GM12878 (cell line): ENCODE measurements at regions of chr5 and their contacts with region 1.

Region 1: GRCh38 chr5:163408311-163408923 is 29.0 kb upstream of the CCNG1 start:
- DNase-seq: peak; percentile 25
- ATAC-seq: peak; percentile 91
- H3K4me3 ChIP-seq: no peak overlapping the region
- H3K27ac ChIP-seq: no peak overlapping the region
- H3K4me1 ChIP-seq: peaks cover 5% of the 10 kb centered on the region
- H3K27me3 ChIP-seq: no peaks in the 10 kb centered on the region; a peak in 1 of 4 replicates
- CTCF ChIP-seq: peak; percentile 73 to 87 (median 85)
- EP300 ChIP-seq: no peak
- POLR2A ChIP-seq: no peak
- RAD21 ChIP-seq: peak; percentile 96

Region 2: DNA sequence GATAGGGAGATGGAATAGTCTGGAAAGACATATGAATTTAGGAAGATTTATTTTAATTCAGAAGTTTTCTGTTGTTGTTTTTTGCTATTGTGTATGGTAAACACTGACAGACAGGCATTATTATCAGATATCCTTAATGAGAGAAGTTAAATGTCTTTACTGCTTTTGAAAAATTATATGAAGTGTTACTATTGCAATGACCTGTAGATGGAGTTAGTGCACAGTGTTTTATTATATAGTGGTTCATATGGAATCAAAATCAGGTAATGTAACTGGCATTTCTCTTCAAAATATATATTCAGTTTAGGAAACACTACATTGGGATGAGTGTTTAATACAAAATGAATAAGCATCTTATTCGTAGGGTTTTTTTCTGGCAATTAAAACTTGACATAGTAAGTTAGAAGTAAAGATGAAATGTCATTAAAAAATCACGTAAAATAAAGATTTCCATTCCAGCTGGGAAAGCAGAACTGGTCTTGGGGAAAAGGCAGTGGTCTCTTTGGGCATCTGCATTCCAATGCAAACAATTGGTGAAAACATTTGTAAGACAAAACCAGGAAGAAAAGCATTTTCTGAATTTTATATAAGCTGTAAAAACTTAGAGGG is 1556.6 kb before region 1 on chr5:
- CTCF ChIA-PET with region 1: interaction called, 12 read pairs
- POLR2A ChIA-PET with region 1: no interaction called
- RAD21 ChIA-PET with region 1: interaction called, 4 read pairs
- SMC1A ChIA-PET with region 1: no interaction called
- in situ Hi-C with region 1: no loop called
- intact Hi-C with region 1: loop called (anchors 2 kb)
- DNase-seq: no peak
- ATAC-seq: peak; percentile 47; the same call in 2 of the 3 replicates
- H3K4me3 ChIP-seq: no peak overlapping the region
- H3K27ac ChIP-seq: no peak overlapping the region
- H3K4me1 ChIP-seq: no peaks in the 10 kb centered on the region
- H3K27me3 ChIP-seq: no peaks in the 10 kb centered on the region
- CTCF ChIP-seq: peak in 2 of 3 experiments; percentile 9 to 24; a peak in 2 of 6 replicates
- EP300 ChIP-seq: no peak
- POLR2A ChIP-seq: no peak
- RAD21 ChIP-seq: peak; percentile 22; the same call in 1 of the 2 replicates

Region 3: GRCh38 chr5:162209005-162209605 is 1199.3 kb before region 1 on chr5:
- CTCF ChIA-PET with region 1: interaction called, 22 read pairs
- POLR2A ChIA-PET with region 1: no interaction called
- RAD21 ChIA-PET with region 1: interaction called, 5 read pairs
- SMC1A ChIA-PET with region 1: interaction called, 8 read pairs
- in situ Hi-C with region 1: no loop called
- intact Hi-C with region 1: loop called (anchors 2 kb)
- DNase-seq: peak; percentile 24
- ATAC-seq: peak; percentile 100
- H3K4me3 ChIP-seq: no peak overlapping the region
- H3K27ac ChIP-seq: no peak overlapping the region
- H3K4me1 ChIP-seq: no peaks in the 10 kb centered on the region
- H3K27me3 ChIP-seq: no peaks in the 10 kb centered on the region
- CTCF ChIP-seq: peak; percentile 42 to 69 (median 58); a peak in 5 of 6 replicates
- EP300 ChIP-seq: no peak
- POLR2A ChIP-seq: no peak
- RAD21 ChIP-seq: peak; percentile 58

Region 4: GRCh38 chr5:163079618-163080017 is 328.8 kb before region 1 on chr5:
- CTCF ChIA-PET with region 1: interaction called, 4 read pairs
- POLR2A ChIA-PET with region 1: no interaction called
- RAD21 ChIA-PET with region 1: interaction called, 4 read pairs
- SMC1A ChIA-PET with region 1: no interaction called
- in situ Hi-C with region 1: no loop called
- intact Hi-C with region 1: loop called (anchors 5 kb)
- DNase-seq: no peak
- ATAC-seq: peak; percentile 87
- H3K4me3 ChIP-seq: no peak overlapping the region
- H3K27ac ChIP-seq: no peak overlapping the region
- H3K4me1 ChIP-seq: no peaks in the 10 kb centered on the region
- H3K27me3 ChIP-seq: no peaks in the 10 kb centered on the region
- CTCF ChIP-seq: peak; percentile 42 to 69 (median 55); a peak in 4 of 6 replicates
- EP300 ChIP-seq: no peak
- POLR2A ChIP-seq: no peak
- RAD21 ChIP-seq: peak; percentile 53

Region 5: DNA sequence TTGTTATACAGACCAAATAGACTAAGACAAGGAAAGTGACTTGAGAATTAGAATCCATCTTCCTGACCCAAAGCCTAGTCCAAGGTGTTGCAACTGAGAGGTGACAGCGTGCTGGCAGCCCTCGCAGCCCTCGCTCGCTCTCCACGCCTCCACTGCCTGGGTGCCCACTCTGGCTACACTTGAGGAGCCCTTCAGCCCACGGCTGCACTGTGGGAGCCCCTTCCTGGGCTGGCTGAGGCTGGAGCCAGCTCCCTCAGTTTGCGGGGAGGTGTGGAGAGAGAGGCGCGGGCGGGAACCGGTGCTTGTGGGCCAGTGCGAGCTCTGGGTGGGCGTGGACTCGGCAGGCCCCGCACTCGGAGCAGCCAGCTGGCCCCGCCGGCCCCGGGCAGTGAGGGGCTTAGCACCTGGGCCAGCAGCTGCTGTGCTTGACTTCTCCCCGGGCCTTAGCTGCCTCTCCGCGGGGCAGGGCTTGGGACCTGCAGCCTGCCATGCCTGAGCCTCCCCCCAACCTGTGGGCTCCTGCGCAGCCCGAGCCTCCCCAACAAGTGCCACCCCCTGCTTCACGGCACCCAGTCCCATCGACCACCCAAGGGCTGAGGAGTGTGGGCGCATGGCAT is 52.7 kb before region 1 on chr5:
- CTCF ChIA-PET with region 1: interaction called, 6 read pairs
- POLR2A ChIA-PET with region 1: no interaction called
- RAD21 ChIA-PET with region 1: interaction called, 5 read pairs
- SMC1A ChIA-PET with region 1: interaction called, 5 read pairs
- in situ Hi-C with region 1: no loop called
- intact Hi-C with region 1: loop called (anchors 2 kb)
- DNase-seq: no peak
- ATAC-seq: no peak
- H3K4me3 ChIP-seq: no peak overlapping the region
- H3K27ac ChIP-seq: no peak overlapping the region
- H3K4me1 ChIP-seq: peaks cover 10% of the 10 kb centered on the region
- H3K27me3 ChIP-seq: no peaks in the 10 kb centered on the region
- CTCF ChIP-seq: no peak
- EP300 ChIP-seq: no peak
- POLR2A ChIP-seq: no peak
- RAD21 ChIP-seq: no peak

Region 6: GRCh38 chr5:163459922-163460766 is 51.7 kb after region 1 on chr5 and contains the starts of genes HMMR and NUDCD2:
- CTCF ChIA-PET with region 1: interaction called, 11 read pairs
- POLR2A ChIA-PET with region 1: no interaction called
- RAD21 ChIA-PET with region 1: interaction called, 4 read pairs
- SMC1A ChIA-PET with region 1: interaction called, 3 read pairs
- in situ Hi-C with region 1: no loop called
- intact Hi-C with region 1: no loop called
- DNase-seq: peak; percentile 96
- ATAC-seq: peak; percentile 87
- H3K4me3 ChIP-seq: peak within 1 kb of the TSS; percentile 91
- H3K27ac ChIP-seq: peak within 1 kb of the TSS; percentile 99
- H3K4me1 ChIP-seq: no peaks in the 10 kb centered on the region; the same call in 1 of the 2 replicates
- H3K27me3 ChIP-seq: no peaks in the 10 kb centered on the region
- CTCF ChIP-seq: no peak
- EP300 ChIP-seq: 0 out of 4 replicates have a peak, but pooled peaks of 1 of the 2 experiments have one; percentile 38
- POLR2A ChIP-seq: peak; percentile 99
- RAD21 ChIP-seq: no peak
- polyA plus RNA-seq, gene HMMR: 58.1 to 64.4 TPM
- polyA plus RNA-seq, gene NUDCD2: 9.1 to 18.1 TPM

Region 7: GRCh38 chr5:164265566-164265965 is 857.1 kb after region 1 on chr5:
- CTCF ChIA-PET with region 1: no interaction called
- POLR2A ChIA-PET with region 1: no interaction called
- RAD21 ChIA-PET with region 1: no interaction called
- SMC1A ChIA-PET with region 1: no interaction called
- in situ Hi-C with region 1: no loop called
- intact Hi-C with region 1: no loop called
- DNase-seq: no peak
- ATAC-seq: no peak
- H3K4me3 ChIP-seq: no peak overlapping the region
- H3K27ac ChIP-seq: no peak overlapping the region
- H3K4me1 ChIP-seq: no peaks in the 10 kb centered on the region
- H3K27me3 ChIP-seq: no peaks in the 10 kb centered on the region
- CTCF ChIP-seq: no peak
- EP300 ChIP-seq: no peak
- POLR2A ChIP-seq: no peak
- RAD21 ChIP-seq: no peak